Naive thymus-derived CD8-positive, alpha-beta T cell (primary cell): ENCODE measurements at regions of chr7 and their contacts with region 1.

Region 1: DNA sequence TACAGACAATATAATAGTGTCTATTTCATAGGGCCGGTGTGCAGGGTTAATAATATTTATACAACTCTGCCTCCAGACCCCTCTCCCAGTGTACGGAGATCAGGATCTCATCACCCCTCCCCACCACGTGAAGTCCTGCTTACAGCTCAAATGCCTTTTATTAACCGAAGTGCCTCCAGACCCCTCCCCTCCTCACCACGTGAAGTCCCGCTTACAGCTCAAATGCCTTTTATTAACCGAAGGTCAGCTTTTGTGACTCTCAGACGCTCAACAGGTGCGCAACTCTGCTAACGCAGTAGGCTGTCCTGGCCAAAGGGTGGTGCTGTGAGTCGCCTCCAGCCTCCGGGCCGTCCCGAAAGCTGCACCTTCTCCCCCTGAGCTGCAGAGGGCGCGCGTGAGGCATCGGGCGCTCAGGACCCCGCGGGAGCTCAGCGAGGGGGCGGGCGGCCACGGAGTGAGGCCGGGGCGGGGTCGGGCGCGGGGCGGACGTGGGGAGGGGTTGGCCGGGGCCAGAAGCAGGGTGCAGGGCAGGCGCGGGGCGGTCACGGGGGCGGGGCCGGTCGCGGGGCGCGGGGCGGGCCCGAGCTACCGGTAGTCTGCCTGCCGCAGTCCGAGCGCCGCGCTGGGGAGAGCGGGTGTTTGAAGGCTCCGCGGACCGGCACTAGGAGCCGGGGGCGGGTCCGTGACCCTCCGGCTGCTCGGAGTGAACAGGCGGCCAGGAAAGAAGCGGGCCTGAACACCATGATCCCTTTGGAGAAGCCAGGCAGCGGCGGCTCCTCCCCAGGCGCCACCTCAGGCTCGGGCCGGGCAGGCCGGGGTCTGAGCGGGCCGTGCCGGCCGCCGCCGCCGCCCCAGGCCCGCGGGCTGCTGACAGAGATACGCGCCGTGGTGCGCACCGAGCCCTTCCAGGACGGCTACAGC is at the start of gene STK17A:
- DNase-seq: peak; percentile 90 to 99 (median 96)
- ATAC-seq: peak; percentile 63 to 66
- H3K4me3 Mint-ChIP-seq: peak within 1 kb of the TSS; percentile 82 to 99 (median 94)
- H3K27ac Mint-ChIP-seq: peak within 1 kb of the TSS; percentile 90 to 99 (median 96)
- H3K4me1 Mint-ChIP-seq: peaks cover 5 to 33% (median 17%) of the 10 kb centered on the region in 4 donors
- H3K27me3 Mint-ChIP-seq: peaks cover 0 to 9% (median 3%) of the 10 kb centered on the region in 5 donors
- polyA plus RNA-seq, gene STK17A: 242 to 346 (median 262) TPM

Region 2: GRCh38 chr7:43568529-43568928 is 14.2 kb before region 1 on chr7:
- POLR2A ChIA-PET with region 1: no interaction called
- DNase-seq: no peak
- ATAC-seq: no peak
- H3K4me3 Mint-ChIP-seq: no peak overlapping the region
- H3K27ac Mint-ChIP-seq: peak overlapping the region in 1 of 10 donors; percentile 16
- H3K4me1 Mint-ChIP-seq: peaks cover 0 to 6% (median 5%) of the 10 kb centered on the region in 4 donors
- H3K27me3 Mint-ChIP-seq: peaks cover 0 to 4% (median 1%) of the 10 kb centered on the region in 5 donors

Region 3: GRCh38 chr7:43602271-43602670 is 19.5 kb after region 1 on chr7:
- POLR2A ChIA-PET with region 1: interaction called, 30 read pairs
- DNase-seq: no peak
- ATAC-seq: no peak
- H3K4me3 Mint-ChIP-seq: no peak overlapping the region
- H3K27ac Mint-ChIP-seq: no peak overlapping the region
- H3K4me1 Mint-ChIP-seq: peaks cover 22 to 54% (median 48%) of the 10 kb centered on the region in 4 donors
- H3K27me3 Mint-ChIP-seq: no peaks in the 10 kb centered on the region

Region 4: GRCh38 chr7:43625453-43625852 is 42.7 kb after region 1 on chr7:
- POLR2A ChIA-PET with region 1: interaction called, 46 read pairs
- DNase-seq: peak in 9 of 10 donors; percentile 35 to 78 (median 72)
- ATAC-seq: peak; percentile 48 to 83
- H3K4me3 Mint-ChIP-seq: peak overlapping the region; percentile 63 to 85 (median 72)
- H3K27ac Mint-ChIP-seq: peak overlapping the region in 8 of 10 donors; percentile 52 to 98 (median 94)
- H3K4me1 Mint-ChIP-seq: peaks cover 43 to 94% (median 86%) of the 10 kb centered on the region in 4 donors
- H3K27me3 Mint-ChIP-seq: peaks cover 0 to 2% (median 0%) of the 10 kb centered on the region in 5 donors

Region 5: DNA sequence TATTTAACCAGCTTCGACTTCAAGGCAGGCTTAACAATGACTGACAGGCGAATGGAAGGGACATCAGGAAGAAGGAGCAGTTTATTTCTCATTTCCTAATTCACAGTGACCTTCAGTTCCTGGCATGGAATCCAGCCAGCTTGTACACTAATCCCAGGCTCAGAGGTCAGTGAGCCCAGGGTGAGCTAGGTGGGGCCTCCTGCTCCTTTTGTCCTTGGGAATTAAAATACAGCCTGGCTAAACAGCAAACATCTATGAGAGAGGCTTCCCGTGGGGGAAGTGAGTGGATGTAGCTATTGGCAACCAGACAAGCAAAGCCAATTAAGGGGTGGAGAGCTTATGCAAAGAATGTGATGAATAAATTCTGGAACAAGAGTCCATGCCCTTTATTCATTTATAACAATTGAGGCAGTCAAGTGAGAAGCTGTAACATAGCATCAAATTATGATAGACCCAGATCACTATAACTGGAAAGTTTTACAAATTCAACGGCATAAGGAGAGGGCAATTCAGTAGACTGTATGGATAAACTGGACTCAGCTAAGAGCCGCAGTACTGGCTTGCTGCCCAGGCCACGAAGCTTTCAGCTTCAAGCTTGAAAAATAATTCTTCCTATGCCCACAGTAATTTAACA is 57.2 kb after region 1 on chr7:
- POLR2A ChIA-PET with region 1: interaction called, 373 read pairs
- DNase-seq: peak in 2 of 10 donors; percentile 40 to 42
- ATAC-seq: peak; percentile 12 to 37
- H3K4me3 Mint-ChIP-seq: peak overlapping the region in 8 of 10 donors; percentile 63 to 80 (median 74)
- H3K27ac Mint-ChIP-seq: peak overlapping the region in 9 of 10 donors; percentile 89 to 99 (median 94)
- H3K4me1 Mint-ChIP-seq: peaks cover 47 to 97% (median 92%) of the 10 kb centered on the region in 4 donors
- H3K27me3 Mint-ChIP-seq: no peaks in the 10 kb centered on the region

Region 6: DNA sequence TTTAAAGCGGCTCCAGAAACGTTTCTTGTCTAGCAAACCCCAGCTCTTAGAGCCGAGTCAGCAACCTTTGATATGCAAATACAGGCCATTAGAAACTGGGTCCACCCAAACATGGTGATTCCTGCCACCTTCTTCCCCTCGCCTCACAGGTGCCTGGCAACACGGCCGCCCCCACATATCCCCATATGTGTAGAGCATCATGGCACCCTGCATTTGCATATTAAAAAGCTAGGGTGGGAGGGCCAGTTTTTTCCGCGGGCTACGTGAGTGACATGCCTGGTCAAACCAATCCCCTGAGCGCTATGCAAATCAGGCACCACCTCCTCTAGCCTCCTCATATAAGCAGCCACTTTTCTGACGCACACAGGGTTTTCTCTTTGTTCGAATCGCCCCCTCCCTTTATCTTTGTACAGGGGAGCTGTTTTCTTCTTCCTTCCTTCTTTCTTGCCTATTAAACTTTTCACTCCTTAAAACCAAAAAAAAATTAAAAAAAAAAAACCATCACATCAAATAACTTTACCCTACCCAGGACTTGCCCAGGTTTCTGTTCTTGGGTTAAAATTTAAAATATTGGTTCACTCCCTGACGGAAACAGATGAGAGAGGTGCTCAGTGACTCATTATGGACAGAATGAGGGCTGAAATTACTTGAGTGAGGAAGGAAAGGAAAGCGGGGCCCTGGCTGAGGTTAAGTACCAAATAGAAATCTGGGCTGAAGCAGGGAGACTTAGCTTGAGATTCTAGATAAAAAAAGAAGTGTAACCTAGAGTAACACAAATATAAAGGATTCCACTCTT is 86.7 kb after region 1 on chr7:
- POLR2A ChIA-PET with region 1: interaction called, 17 read pairs
- DNase-seq: peak in 8 of 10 donors; percentile 43 to 77 (median 55)
- ATAC-seq: peak; percentile 78 to 83
- H3K4me3 Mint-ChIP-seq: peak overlapping the region; percentile 47 to 81 (median 68)
- H3K27ac Mint-ChIP-seq: peak overlapping the region; percentile 63 to 90 (median 88)
- H3K4me1 Mint-ChIP-seq: peaks cover 26 to 84% (median 76%) of the 10 kb centered on the region in 4 donors
- H3K27me3 Mint-ChIP-seq: no peaks in the 10 kb centered on the region

Region 7: DNA sequence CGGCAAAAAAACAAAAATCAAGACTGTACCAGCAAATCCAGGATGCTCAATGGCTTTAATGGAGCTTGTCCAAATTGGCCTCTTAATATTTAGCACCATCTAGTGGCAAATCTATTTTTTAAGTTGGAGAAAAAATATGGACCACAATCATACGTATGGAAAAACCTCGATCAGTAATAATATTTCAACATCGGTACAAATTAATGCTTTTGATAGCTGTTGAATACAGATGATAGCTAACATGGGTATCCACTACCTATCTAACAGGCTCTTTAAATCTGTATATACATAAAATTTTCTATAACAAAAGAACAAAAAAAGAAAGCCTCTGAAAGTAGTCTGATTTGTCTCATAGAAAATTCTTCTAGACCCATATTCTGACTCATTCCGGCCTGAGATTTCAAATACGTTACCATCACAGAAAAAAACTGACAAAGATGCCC is 117.3 kb after region 1 on chr7:
- POLR2A ChIA-PET with region 1: interaction called, 192 read pairs
- DNase-seq: peak in 4 of 10 donors; percentile 7 to 78 (median 71)
- ATAC-seq: peak; percentile 61 to 75
- H3K4me3 Mint-ChIP-seq: peak overlapping the region; percentile 40 to 78 (median 58)
- H3K27ac Mint-ChIP-seq: peak overlapping the region; percentile 54 to 88 (median 84)
- H3K4me1 Mint-ChIP-seq: peaks cover 20 to 49% (median 42%) of the 10 kb centered on the region in 4 donors
- H3K27me3 Mint-ChIP-seq: no peaks in the 10 kb centered on the region

Region 8: GRCh38 chr7:43838201-43838659 is 255.5 kb after region 1 on chr7:
- POLR2A ChIA-PET with region 1: interaction called, 11 read pairs
- DNase-seq: no peak
- ATAC-seq: no peak
- H3K4me3 Mint-ChIP-seq: peak overlapping the region in 2 of 10 donors; percentile 71 to 72
- H3K27ac Mint-ChIP-seq: peak overlapping the region in 7 of 10 donors; percentile 18 to 79 (median 63)
- H3K4me1 Mint-ChIP-seq: peaks cover 5 to 26% (median 16%) of the 10 kb centered on the region in 4 donors
- H3K27me3 Mint-ChIP-seq: peaks cover 0 to 4% (median under 1%) of the 10 kb centered on the region in 5 donors